Heart right ventricle (tissue), 16 donors: ENCODE measurements at regions of chr4 and their contacts with region 1.

Region 1: GRCh38 chr4:128819082-128819742 is 9.7 kb downstream of the JADE1 start:
- DNase-seq: no peak
- ATAC-seq: peak in 1 of 8 donors; percentile 23
- H3K4me3 ChIP-seq: no peak overlapping the region
- H3K27ac ChIP-seq: no peak overlapping the region
- H3K4me1 ChIP-seq: peaks cover 0 to 62% (median 35%) of the 10 kb centered on the region in 9 donors
- H3K27me3 ChIP-seq: no peaks in the 10 kb centered on the region
- CTCF ChIP-seq: no peak

Region 2: GRCh38 chr4:128393101-128393704 is 426.0 kb before region 1 on chr4:
- intact Hi-C with region 1: no loop called
- DNase-seq: peak; percentile 22 to 28
- ATAC-seq: peak; percentile 38 to 91 (median 84)
- H3K4me3 ChIP-seq: no peak overlapping the region
- H3K27ac ChIP-seq: peak overlapping the region in 9 of 10 donors; percentile 24 to 83 (median 64)
- H3K4me1 ChIP-seq: peaks cover 0 to 27% (median 12%) of the 10 kb centered on the region in 9 donors
- H3K27me3 ChIP-seq: no peaks in the 10 kb centered on the region
- CTCF ChIP-seq: no peak

Region 3: DNA sequence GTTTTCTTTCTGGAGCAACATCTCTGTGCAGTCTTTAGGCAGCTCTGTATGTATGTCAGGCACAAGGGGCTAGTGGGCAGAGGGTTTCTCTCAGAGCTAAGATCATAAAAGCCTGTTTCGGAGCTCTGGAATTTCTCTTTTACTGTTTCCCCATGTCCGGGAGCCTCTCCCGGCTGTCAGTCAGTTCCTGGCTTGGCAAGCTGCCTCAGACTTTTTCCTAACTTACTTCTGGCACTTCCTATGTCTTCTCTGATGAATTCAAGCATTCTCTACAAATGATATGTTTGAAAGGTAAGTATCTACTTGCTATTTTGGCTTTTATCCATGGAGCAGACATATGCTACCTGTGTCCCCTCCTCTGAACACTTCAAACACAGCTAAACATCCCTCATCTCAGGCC is 402.3 kb before region 1 on chr4:
- intact Hi-C with region 1: no loop called
- DNase-seq: no peak
- ATAC-seq: peak in 2 of 8 donors; percentile 17 to 18
- H3K4me3 ChIP-seq: no peak overlapping the region
- H3K27ac ChIP-seq: no peak overlapping the region
- H3K4me1 ChIP-seq: peaks cover 0 to 5% (median 0%) of the 10 kb centered on the region in 9 donors
- H3K27me3 ChIP-seq: no peaks in the 10 kb centered on the region
- CTCF ChIP-seq: no peak

Region 4: GRCh38 chr4:128854433-128854832 is 35.2 kb after region 1 on chr4:
- intact Hi-C with region 1: loop called in 4 of 10 experiments (anchors 5 kb)
- DNase-seq: no peak
- ATAC-seq: no peak
- H3K4me3 ChIP-seq: no peak overlapping the region
- H3K27ac ChIP-seq: peak overlapping the region in 1 of 10 donors; percentile 49
- H3K4me1 ChIP-seq: peaks cover 3 to 25% (median 13%) of the 10 kb centered on the region in 9 donors
- H3K27me3 ChIP-seq: no peaks in the 10 kb centered on the region
- CTCF ChIP-seq: no peak